Right ventricle myocardium superior (tissue), 1 donor: ENCODE measurements at regions of chr9 and their contacts with region 1.

Region 1: DNA sequence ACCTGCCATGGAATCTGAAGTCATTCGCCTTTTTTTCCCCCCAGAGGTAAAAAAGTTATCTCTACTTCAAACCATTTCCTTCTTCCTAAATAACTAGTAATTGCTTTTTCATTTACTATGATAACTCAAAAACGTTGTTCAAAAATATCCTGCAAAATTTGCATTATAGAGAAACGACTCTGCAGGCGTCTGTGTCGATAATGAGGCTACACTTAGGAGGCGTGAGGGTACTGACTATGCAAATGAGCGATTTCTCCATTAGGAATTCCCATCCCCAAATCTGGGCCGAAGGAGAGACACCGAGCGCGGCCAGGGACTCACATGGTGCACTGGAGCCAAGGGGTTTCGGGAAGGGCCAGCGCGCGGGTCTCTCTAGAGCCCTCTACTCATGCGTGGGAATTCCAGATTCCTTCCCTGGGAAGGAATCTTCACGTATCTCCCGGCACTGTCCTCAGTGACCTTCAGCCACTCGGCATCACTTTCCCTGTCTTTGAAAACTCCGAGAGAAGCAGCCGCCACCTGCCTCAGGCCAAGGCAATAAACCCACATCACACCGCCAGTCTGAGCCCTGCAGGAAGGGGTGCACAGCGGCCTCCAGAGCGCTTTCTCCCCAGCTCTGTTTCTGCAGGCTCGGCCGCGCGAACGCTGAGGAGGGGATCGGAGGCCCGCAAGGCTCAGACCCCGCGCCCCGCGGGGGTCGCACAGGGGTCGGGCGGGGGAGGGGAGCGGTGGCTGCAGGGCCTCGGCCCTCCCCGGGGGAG is 718 bp upstream of the DENND4C start:
- DNase-seq: peak; percentile 66
- ATAC-seq: peak; percentile 65

Region 2: DNA sequence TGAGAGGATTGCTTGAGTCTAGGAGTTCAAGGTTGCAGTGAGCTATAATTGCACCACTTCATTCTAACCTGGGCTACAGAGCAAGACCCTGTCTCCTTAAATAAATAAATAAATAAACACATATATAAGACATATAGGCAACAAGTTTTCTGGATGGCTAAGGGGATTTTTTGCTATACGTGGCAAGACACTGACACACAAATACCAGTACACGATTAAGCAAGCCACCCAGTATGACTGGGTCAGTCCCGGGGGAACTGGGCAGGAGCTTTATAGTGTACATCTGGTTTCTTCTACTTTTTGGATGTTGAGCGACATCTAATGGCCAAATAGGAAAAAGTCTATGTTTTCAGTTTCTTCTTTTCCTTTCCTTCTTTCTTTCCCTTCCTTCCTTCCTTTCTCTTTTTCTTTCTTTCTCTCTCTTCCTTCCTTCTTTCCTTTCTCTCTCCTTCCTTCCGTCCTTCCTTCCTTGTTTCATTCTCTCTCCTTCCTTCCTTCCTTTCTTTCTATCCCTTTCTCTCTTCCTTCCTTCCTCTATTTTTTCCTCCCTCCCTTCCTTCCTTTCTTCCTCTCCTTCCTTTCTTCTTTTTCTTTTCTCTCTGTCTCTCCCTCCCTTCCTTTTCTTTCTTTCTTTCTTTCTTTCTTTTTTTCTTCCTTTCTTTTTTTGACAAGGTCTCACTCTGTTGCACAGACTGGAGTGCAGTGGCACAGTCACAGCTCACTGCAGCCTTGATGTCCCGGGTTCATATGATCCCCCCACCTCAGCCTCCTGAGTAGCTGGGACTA is 55.5 kb before region 1 on chr9:
- intact Hi-C with region 1: loop called (anchors 5 kb)
- DNase-seq: peak; percentile 77
- ATAC-seq: peak; percentile 92

Region 3: GRCh38 chr9:19201899-19202891 is 27.6 kb before region 1 on chr9:
- intact Hi-C with region 1: loop called (anchors 2 kb)
- DNase-seq: no peak
- ATAC-seq: no peak

Region 4: GRCh38 chr9:19306568-19306967 is 76.8 kb after region 1 on chr9:
- intact Hi-C with region 1: no loop called
- DNase-seq: no peak
- ATAC-seq: no peak